Caco-2 (cell line): ENCODE measurements at regions of chr10 and their contacts with region 1.

Region 1: GRCh38 chr10:93288654-93289634 is 193.2 kb downstream of the MYOF start:
- DNase-seq: peak; percentile 93 to 96
- H3K4me3 ChIP-seq: no peak overlapping the region
- H3K4me3 Mint-ChIP-seq: peak overlapping the region; percentile 55
- H3K27ac Mint-ChIP-seq: peak overlapping the region; percentile 92
- H3K4me1 ChIP-seq: peaks cover 45% of the 10 kb centered on the region
- H3K4me1 Mint-ChIP-seq: peaks cover 34% of the 10 kb centered on the region
- H3K27me3 ChIP-seq: no peaks in the 10 kb centered on the region
- H3K27me3 Mint-ChIP-seq: no peaks in the 10 kb centered on the region
- CTCF ChIP-seq: peak; percentile 77 to 91

Region 2: GRCh38 chr10:93006435-93007039 is 282.4 kb before region 1 on chr10:
- CTCF ChIA-PET with region 1: no interaction called
- POLR2A ChIA-PET with region 1: no interaction called
- intact Hi-C with region 1: loop called (anchors 1 kb)
- DNase-seq: peak in 1 of 2 experiments; percentile 53
- H3K4me3 ChIP-seq: no peak overlapping the region
- H3K4me3 Mint-ChIP-seq: no peak overlapping the region
- H3K27ac Mint-ChIP-seq: no peak overlapping the region
- H3K4me1 ChIP-seq: no peaks in the 10 kb centered on the region
- H3K4me1 Mint-ChIP-seq: no peaks in the 10 kb centered on the region
- H3K27me3 ChIP-seq: no peaks in the 10 kb centered on the region
- H3K27me3 Mint-ChIP-seq: no peaks in the 10 kb centered on the region
- CTCF ChIP-seq: peak; percentile 64 to 72

Region 3: DNA sequence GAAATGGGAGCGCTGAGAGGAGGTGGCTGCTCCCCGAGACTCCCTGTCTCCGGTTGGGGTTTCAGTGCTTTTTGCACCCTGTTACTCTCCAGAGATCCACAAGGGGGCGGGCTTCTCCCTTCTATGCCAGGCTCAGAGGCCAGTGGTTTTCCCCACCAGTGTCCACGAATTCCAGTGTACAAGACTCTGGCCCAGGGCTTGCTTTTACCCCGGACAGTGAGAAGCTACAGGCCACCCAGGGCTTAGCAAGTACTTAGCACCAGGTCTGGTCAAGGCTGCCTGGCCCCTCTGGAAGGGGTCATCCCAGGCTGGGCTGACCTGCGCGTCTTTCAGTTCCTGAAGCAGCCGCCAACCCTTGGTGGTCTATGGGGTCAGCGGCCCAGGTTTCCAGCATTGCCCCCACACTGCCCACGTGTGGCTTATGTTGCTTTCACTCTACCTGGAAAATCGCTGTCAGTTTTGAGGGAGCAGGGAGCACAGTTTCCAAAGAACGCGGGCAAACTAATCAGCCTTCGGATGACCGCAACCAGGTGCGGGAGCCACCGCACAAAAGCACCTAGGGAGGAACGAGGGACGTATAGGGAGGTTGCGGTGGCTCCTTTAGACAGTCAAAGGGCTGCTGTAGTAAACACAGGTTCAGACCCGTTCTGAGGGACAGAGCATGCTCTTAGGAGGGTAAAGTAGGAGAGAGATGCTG is 208.4 kb before region 1 on chr10:
- CTCF ChIA-PET with region 1: no interaction called
- POLR2A ChIA-PET with region 1: no interaction called
- intact Hi-C with region 1: loop called (anchors 1 kb)
- DNase-seq: peak; percentile 59 to 72
- H3K4me3 ChIP-seq: no peak overlapping the region
- H3K4me3 Mint-ChIP-seq: no peak overlapping the region
- H3K27ac Mint-ChIP-seq: peak overlapping the region; percentile 86
- H3K4me1 ChIP-seq: peaks cover 26% of the 10 kb centered on the region
- H3K4me1 Mint-ChIP-seq: peaks cover 25% of the 10 kb centered on the region
- H3K27me3 ChIP-seq: no peaks in the 10 kb centered on the region
- H3K27me3 Mint-ChIP-seq: no peaks in the 10 kb centered on the region
- CTCF ChIP-seq: peak; percentile 84 to 94

Region 4: DNA sequence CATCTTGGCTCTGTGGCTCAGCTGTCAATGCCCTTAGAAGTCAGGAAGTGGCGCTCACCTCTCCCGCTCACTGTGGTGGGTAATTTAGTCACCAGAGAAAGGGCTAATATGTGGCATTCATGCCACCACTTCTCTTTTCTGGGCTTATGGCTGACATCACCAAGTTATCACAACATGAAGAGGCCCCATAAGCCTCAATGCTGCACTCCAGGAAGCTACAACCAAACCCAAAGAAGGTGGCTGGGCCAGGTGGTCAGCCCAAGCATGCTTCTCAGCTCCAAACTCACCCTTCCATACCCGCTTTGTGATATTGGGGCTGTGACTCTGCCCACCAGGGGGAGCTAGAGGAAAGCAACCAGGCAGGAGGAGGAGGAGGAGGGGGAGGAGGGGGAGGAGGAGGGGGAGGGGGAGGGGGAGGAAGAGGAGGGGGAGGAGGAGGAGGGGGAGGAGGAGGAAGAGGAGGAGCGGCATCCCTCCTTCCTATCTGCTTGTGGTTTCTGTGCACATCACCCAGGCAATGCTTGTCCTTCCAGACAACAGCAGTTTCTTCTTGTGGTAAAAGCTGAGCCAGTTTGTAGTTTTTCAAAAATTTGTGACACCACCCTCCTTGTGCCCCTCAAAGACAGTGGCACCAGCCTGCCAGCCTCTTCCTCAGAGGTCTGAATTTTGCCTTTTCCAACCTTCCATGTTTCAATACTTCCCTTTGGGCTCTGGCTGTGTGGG is 173.1 kb before region 1 on chr10:
- CTCF ChIA-PET with region 1: interaction called, 3 read pairs
- POLR2A ChIA-PET with region 1: no interaction called
- intact Hi-C with region 1: loop called (anchors 2 kb)
- DNase-seq: peak; percentile 75 to 82
- H3K4me3 ChIP-seq: no peak overlapping the region
- H3K4me3 Mint-ChIP-seq: no peak overlapping the region
- H3K27ac Mint-ChIP-seq: no peak overlapping the region
- H3K4me1 ChIP-seq: 0 out of 2 replicates have a peak, but pooled peaks cover 6% of the 10 kb centered on the region
- H3K4me1 Mint-ChIP-seq: peaks cover 9% of the 10 kb centered on the region
- H3K27me3 ChIP-seq: no peaks in the 10 kb centered on the region
- H3K27me3 Mint-ChIP-seq: no peaks in the 10 kb centered on the region
- CTCF ChIP-seq: peak; percentile 35 to 56

Region 5: DNA sequence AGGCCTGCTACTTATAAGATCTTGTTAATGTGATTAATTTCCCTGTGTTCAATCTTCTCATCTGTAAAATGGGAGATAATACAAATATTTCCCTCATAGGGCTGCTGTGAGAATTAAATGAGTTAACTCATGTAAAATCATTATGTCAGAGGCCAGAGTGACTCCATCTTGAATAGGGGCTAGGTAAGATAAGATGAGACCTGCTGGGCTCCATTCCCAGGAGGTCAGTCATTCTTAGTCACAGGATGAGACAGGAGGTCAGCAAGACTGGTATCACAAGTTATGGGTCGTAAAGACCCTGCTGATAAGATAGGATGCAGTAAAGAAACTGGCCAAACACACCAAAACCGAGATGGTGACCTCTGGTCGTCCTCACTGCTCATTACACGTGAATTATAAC is 14.5 kb before region 1 on chr10:
- CTCF ChIA-PET with region 1: no interaction called
- POLR2A ChIA-PET with region 1: no interaction called
- intact Hi-C with region 1: loop called (anchors 2 kb)
- DNase-seq: peak; percentile 72 to 81
- H3K4me3 ChIP-seq: no peak overlapping the region
- H3K4me3 Mint-ChIP-seq: no peak overlapping the region
- H3K27ac Mint-ChIP-seq: peak overlapping the region; percentile 94
- H3K4me1 ChIP-seq: peaks cover 23% of the 10 kb centered on the region
- H3K4me1 Mint-ChIP-seq: peaks cover 14% of the 10 kb centered on the region
- H3K27me3 ChIP-seq: no peaks in the 10 kb centered on the region
- H3K27me3 Mint-ChIP-seq: no peaks in the 10 kb centered on the region
- CTCF ChIP-seq: no peak

Region 6: GRCh38 chr10:93437088-93437945 is 148.4 kb after region 1 on chr10:
- CTCF ChIA-PET with region 1: no interaction called
- POLR2A ChIA-PET with region 1: no interaction called
- intact Hi-C with region 1: no loop called
- DNase-seq: peak; percentile 84 to 88
- H3K4me3 ChIP-seq: no peak overlapping the region
- H3K4me3 Mint-ChIP-seq: peak overlapping the region; percentile 60
- H3K27ac Mint-ChIP-seq: peak overlapping the region; percentile 96
- H3K4me1 ChIP-seq: peaks cover 73% of the 10 kb centered on the region
- H3K4me1 Mint-ChIP-seq: peaks cover 75% of the 10 kb centered on the region
- H3K27me3 ChIP-seq: no peaks in the 10 kb centered on the region
- H3K27me3 Mint-ChIP-seq: no peaks in the 10 kb centered on the region
- CTCF ChIP-seq: no peak